MCF 10A (cell line): ENCODE measurements at regions of chr7 and their contacts with region 1.

Region 1: GRCh38 chr7:10889266-10889898 is 84.3 kb upstream of the PHF14 start:
- DNase-seq: peak; percentile 68
- H3K4me3 Mint-ChIP-seq: no peak overlapping the region
- H3K27ac Mint-ChIP-seq: no peak overlapping the region
- H3K4me1 Mint-ChIP-seq: no peaks in the 10 kb centered on the region
- H3K27me3 Mint-ChIP-seq: no peaks in the 10 kb centered on the region
- CTCF ChIP-seq: peak; percentile 83

Region 2: GRCh38 chr7:10637991-10638390 is 251.4 kb before region 1 on chr7:
- CTCF ChIA-PET with region 1: no interaction called
- POLR2A ChIA-PET with region 1: no interaction called
- intact Hi-C with region 1: loop called (anchors 5 kb)
- DNase-seq: no peak
- H3K4me3 Mint-ChIP-seq: no peak overlapping the region
- H3K27ac Mint-ChIP-seq: no peak overlapping the region
- H3K4me1 Mint-ChIP-seq: no peaks in the 10 kb centered on the region
- H3K27me3 Mint-ChIP-seq: no peaks in the 10 kb centered on the region
- CTCF ChIP-seq: no peak

Region 3: DNA sequence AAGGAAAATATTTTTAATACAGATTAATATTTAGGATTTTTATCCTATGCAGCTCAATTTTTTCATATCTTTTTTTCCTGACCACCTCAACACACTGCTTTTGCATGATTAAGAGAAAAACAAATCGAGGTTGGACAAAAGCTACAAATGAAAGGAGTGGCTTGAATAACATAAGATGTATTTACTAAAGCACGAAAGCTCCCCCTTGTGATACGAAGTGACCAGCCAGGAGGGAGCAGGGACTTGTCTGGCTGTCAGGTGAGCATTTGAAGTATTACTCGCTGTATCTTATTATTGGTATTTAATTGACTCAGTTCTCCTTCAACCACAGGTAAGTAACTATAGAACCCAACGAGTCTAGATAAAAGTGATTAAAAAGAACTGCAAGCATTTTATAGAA is 180.9 kb before region 1 on chr7:
- CTCF ChIA-PET with region 1: no interaction called
- POLR2A ChIA-PET with region 1: no interaction called
- intact Hi-C with region 1: loop called (anchors 1 kb)
- DNase-seq: peak; percentile 40
- H3K4me3 Mint-ChIP-seq: no peak overlapping the region
- H3K27ac Mint-ChIP-seq: no peak overlapping the region
- H3K4me1 Mint-ChIP-seq: no peaks in the 10 kb centered on the region
- H3K27me3 Mint-ChIP-seq: no peaks in the 10 kb centered on the region
- CTCF ChIP-seq: peak; percentile 30

Region 4: GRCh38 chr7:10874666-10875065 is 14.7 kb before region 1 on chr7:
- CTCF ChIA-PET with region 1: interaction called, 13 read pairs
- POLR2A ChIA-PET with region 1: no interaction called
- intact Hi-C with region 1: no loop called
- DNase-seq: no peak
- H3K4me3 Mint-ChIP-seq: no peak overlapping the region
- H3K27ac Mint-ChIP-seq: no peak overlapping the region
- H3K4me1 Mint-ChIP-seq: no peaks in the 10 kb centered on the region
- H3K27me3 Mint-ChIP-seq: no peaks in the 10 kb centered on the region
- CTCF ChIP-seq: no peak

Region 5: GRCh38 chr7:11006291-11006690 is 116.9 kb after region 1 on chr7:
- CTCF ChIA-PET with region 1: no interaction called
- POLR2A ChIA-PET with region 1: no interaction called
- intact Hi-C with region 1: no loop called
- DNase-seq: no peak
- H3K4me3 Mint-ChIP-seq: no peak overlapping the region
- H3K27ac Mint-ChIP-seq: no peak overlapping the region
- H3K4me1 Mint-ChIP-seq: no peaks in the 10 kb centered on the region
- H3K27me3 Mint-ChIP-seq: no peaks in the 10 kb centered on the region
- CTCF ChIP-seq: no peak

Region 6: GRCh38 chr7:11343818-11344413 is 454.5 kb after region 1 on chr7:
- CTCF ChIA-PET with region 1: no interaction called
- POLR2A ChIA-PET with region 1: no interaction called
- intact Hi-C with region 1: loop called (anchors 1 kb)
- DNase-seq: peak; percentile 62
- H3K4me3 Mint-ChIP-seq: no peak overlapping the region
- H3K27ac Mint-ChIP-seq: no peak overlapping the region
- H3K4me1 Mint-ChIP-seq: peaks cover 12% of the 10 kb centered on the region
- H3K27me3 Mint-ChIP-seq: no peaks in the 10 kb centered on the region
- CTCF ChIP-seq: peak; percentile 62